Endothelial cell of umbilical vein (primary cell): ENCODE measurements at regions of chr7 and their contacts with region 1.

Region 1: DNA sequence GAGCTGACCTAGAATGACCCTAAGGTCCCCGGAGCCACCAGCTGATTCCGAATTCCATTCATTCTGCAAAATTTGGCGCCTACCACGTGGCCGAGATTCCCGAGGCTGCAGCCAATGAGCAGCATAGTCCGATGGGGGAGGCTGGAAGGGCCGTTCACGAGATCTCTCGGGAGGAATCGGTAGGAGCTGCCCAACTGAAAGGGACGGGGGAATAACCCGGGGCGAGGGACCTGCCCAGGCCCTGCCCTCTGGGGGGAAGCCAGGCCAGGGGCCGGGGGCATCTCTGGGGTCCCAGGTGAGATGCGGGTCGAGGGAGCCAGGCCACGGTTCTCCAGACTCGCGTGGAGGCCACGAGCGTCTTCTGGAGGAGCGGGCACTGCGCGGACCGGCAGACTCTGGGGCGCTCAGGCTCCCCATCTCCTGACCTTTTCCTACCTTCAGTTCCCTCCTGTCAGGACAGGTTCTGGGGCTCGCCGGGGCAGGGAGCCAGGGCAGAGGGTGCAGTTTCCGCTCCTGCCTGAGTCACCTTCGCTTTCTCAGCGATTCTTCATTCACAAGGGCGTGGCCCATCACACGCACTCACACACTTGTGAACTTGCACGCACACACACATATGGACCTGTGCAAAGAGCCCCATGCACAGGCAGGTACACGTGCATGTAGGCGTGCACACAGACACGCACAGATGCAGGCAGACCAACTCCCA is 173.4 kb downstream of the RNF216 start:
- DNase-seq: no peak
- H3K4me3 ChIP-seq: no peak overlapping the region
- H3K27ac ChIP-seq: no peak overlapping the region
- H3K4me1 ChIP-seq: peaks cover 5% of the 10 kb centered on the region
- H3K27me3 ChIP-seq: no peaks in the 10 kb centered on the region
- CTCF ChIP-seq: no peak
- POLR2A ChIP-seq: peak; percentile 37

Region 2: DNA sequence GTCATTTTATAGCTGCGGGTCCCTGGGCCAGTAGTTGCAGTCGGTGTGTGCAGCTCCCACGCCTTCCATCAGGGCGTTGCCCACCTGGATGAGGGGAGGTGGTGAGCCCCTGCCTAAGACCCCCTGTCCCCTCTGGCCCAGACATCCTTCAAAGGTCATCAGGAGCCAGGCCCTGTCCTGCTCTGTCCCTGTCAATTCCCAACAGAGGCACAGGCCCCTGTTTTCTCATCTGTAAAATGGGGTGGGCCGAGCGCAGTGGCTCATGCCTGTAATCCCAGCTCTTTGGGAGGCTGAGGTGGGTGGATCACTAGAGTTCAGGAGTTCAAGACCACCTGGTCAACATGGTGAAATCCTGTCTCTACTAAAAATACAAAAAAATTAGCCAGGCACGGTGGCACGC is 56.0 kb before region 1 on chr7:
- CTCF ChIA-PET with region 1: no interaction called
- POLR2A ChIA-PET with region 1: interaction called, 18 read pairs
- dilution Hi-C with region 1: no loop called
- intact Hi-C with region 1: no loop called
- DNase-seq: no peak
- H3K4me3 ChIP-seq: no peak overlapping the region
- H3K27ac ChIP-seq: no peak overlapping the region
- H3K4me1 ChIP-seq: peaks cover 12% of the 10 kb centered on the region
- H3K27me3 ChIP-seq: no peaks in the 10 kb centered on the region
- CTCF ChIP-seq: no peak
- POLR2A ChIP-seq: no peak

Region 3: DNA sequence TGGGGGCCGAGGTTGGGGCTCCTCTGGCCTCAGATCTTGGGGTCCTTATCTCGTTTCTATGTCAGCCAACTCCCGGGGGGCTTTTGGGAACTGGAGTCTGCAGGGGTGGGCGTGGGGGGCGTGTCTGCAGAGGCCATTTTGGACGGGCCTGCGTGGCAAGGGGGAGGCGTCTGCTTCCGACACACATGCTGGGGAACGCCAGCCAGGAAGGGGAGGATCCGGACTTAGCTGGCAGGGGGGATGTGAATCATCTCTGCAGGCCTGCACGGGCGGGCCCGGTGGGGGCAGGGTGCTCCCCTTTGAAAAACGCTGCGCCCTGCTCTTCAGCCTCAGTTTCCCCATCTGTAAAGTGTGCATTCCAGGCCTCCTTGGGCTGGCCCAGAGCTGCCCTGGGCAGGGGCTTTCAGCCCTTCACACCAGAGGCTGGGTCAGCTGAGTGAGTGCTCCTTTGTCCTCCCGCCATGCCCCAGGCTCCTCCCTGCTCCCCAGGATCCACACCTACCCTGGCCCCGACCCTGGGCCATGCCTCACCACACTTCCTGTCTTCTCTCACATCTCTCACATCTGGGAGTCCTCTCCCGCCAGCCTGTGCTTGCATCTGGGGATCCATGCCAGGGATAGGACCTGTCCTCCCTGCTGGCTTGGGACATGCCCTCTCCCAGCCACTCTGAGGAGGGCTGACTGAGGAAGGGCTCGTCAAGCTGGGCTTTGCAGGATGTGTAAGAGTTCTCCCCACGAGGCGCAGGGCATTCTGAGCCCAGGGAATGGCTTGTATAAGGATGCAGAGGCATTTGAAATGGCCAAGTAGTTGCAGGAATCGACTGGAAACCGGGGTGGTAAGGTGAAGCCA is 11.8 kb before region 1 on chr7:
- CTCF ChIA-PET with region 1: interaction called, 10 read pairs
- POLR2A ChIA-PET with region 1: interaction called, 8 read pairs
- dilution Hi-C with region 1: no loop called
- intact Hi-C with region 1: no loop called
- DNase-seq: peak; percentile 88
- H3K4me3 ChIP-seq: peak overlapping the region; percentile 20 to 93 (median 85)
- H3K27ac ChIP-seq: peak overlapping the region; percentile 72
- H3K4me1 ChIP-seq: peaks cover 41% of the 10 kb centered on the region
- H3K27me3 ChIP-seq: no peaks in the 10 kb centered on the region
- CTCF ChIP-seq: no peak
- POLR2A ChIP-seq: peak; percentile 82

Region 4: GRCh38 chr7:5629941-5630340 is 21.8 kb after region 1 on chr7:
- CTCF ChIA-PET with region 1: interaction called, 9 read pairs
- POLR2A ChIA-PET with region 1: no interaction called
- dilution Hi-C with region 1: no loop called
- intact Hi-C with region 1: loop called (anchors 2 kb)
- DNase-seq: peak; percentile 55
- H3K4me3 ChIP-seq: no peak overlapping the region
- H3K27ac ChIP-seq: peak overlapping the region; percentile 22
- H3K4me1 ChIP-seq: peaks cover 31% of the 10 kb centered on the region
- H3K27me3 ChIP-seq: no peaks in the 10 kb centered on the region
- CTCF ChIP-seq: peak in 1 of 2 donors; percentile 15
- POLR2A ChIP-seq: no peak